ENCODE measurements at regions of chr2 and their contacts with region 1.

Region 1: GRCh38 chr2:148042219-148042618 is 21.3 kb downstream of the MBD5 start:
- DNase-seq: no peak
- ATAC-seq: peak; percentile 89
- H3K4me3 ChIP-seq: 0 out of 2 replicates have a peak overlapping the region, but pooled peaks have one; percentile 8
- H3K27ac ChIP-seq: peak overlapping the region; percentile 61
- H3K4me1 ChIP-seq: peaks cover 23% of the 10 kb centered on the region
- H3K27me3 ChIP-seq: no peaks in the 10 kb centered on the region
- CTCF ChIP-seq: no peak
- EP300 ChIP-seq: peak; percentile 76 to 83
- POLR2A ChIP-seq: no peak
- RAD21 ChIP-seq: 0 out of 2 replicates have a peak, but pooled peaks have one; percentile 4

Region 2: GRCh38 chr2:148020111-148021058 is 21.8 kb before region 1 on chr2 and contains the start of gene ORC4:
- CTCF ChIA-PET with region 1: interaction called, 11 read pairs
- POLR2A ChIA-PET with region 1: interaction called, 57 read pairs
- RAD21 ChIA-PET with region 1: interaction called, 90 read pairs
- SMC1A ChIA-PET with region 1: interaction called, 177 read pairs
- in situ Hi-C with region 1: no loop called
- intact Hi-C with region 1: no loop called
- DNase-seq: peak; percentile 99
- ATAC-seq: peak; percentile 81
- H3K4me3 ChIP-seq: peak within 1 kb of the TSS; percentile 99
- H3K27ac ChIP-seq: peak within 1 kb of the TSS; percentile 96
- H3K4me1 ChIP-seq: no peaks in the 10 kb centered on the region
- H3K27me3 ChIP-seq: no peaks in the 10 kb centered on the region
- CTCF ChIP-seq: peak in 2 of 3 experiments; percentile 19 to 26; a peak in 2 of 6 replicates
- EP300 ChIP-seq: no peak; a peak in 1 of 4 replicates
- POLR2A ChIP-seq: peak; percentile 90
- RAD21 ChIP-seq: peak; percentile 19; the same call in 1 of the 2 replicates
- polyA plus RNA-seq, gene ORC4: 31.3 to 71.3 TPM

Region 3: DNA sequence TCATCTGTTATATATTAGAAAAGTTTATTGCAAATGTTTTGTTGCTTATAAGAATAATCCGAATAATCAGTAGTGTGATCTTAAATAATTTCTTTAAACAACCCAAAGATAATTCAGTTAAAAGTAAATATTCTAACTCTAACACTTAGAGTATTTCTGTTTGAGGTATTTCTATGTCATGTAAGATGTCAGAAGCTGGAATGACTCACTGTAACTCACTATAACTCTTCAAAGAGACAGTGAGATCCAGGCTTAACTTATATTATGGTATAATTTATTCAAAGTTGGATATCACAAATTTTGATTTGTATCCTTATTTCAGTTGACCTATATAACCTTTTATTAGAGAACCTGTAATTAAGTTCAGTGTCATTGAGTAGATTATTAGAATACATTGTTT is 14.4 kb before region 1 on chr2:
- CTCF ChIA-PET with region 1: interaction called, 11 read pairs
- POLR2A ChIA-PET with region 1: interaction called, 57 read pairs
- RAD21 ChIA-PET with region 1: interaction called, 90 read pairs
- SMC1A ChIA-PET with region 1: interaction called, 177 read pairs
- in situ Hi-C with region 1: no loop called
- intact Hi-C with region 1: no loop called
- DNase-seq: no peak
- ATAC-seq: peak; percentile 49
- H3K4me3 ChIP-seq: no peak overlapping the region
- H3K27ac ChIP-seq: no peak overlapping the region
- H3K4me1 ChIP-seq: no peaks in the 10 kb centered on the region
- H3K27me3 ChIP-seq: no peaks in the 10 kb centered on the region
- CTCF ChIP-seq: no peak
- EP300 ChIP-seq: no peak
- POLR2A ChIP-seq: no peak
- RAD21 ChIP-seq: no peak